Activated naive CD4-positive, alpha-beta T cell treated with anti-CD3 and anti-CD28 coated beads, Interleukin-2, amount 10 ng/mL, durations not matched to agents 7 days and 5 days (primary cell): ENCODE measurements at regions of chr16 and their contacts with region 1.

Region 1: DNA sequence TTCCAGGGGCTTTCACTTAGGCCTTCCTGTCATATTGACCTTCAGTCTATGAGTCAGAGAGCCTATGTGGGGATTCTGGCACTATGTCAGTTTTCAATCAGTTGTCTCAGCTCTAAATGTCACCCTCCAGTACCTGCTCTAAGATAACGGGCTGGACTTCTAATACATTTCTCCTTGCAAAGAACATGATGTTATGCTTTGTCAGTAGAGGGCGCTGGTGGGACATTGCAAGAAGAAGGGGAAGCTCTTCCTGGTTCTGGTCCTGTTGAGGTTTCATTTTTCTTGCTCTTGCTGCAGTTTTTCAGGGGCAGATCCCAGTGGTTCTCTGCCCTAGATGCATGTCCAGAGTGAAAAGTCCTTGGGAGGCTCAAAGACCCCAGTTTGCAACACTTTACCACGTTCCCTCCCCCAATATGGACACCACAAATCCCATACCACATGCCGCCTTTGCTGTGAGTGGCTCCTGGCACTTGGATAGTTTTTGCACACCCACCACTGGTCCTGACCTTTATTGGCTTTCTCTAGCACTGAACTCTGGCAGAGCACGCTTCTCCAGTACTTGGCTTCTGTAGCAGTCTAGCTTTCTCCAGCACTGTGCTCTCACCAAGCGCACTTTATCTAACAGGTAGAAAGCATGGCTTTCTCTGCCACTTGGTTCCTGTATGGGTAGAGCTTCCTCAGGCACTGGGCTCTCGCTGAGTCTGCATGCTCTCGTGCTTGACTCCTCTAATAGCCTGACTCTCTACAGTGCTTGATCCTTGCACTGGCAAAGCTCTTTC is 49.0 kb downstream of the BCL7C start:
- DNase-seq: peak; percentile 89
- H3K4me3 Mint-ChIP-seq: peak overlapping the region; percentile 4
- H3K27ac Mint-ChIP-seq: peak overlapping the region; percentile 20
- H3K4me1 Mint-ChIP-seq: peaks cover 12% of the 10 kb centered on the region
- H3K27me3 Mint-ChIP-seq: peaks cover 18% of the 10 kb centered on the region

Region 2: DNA sequence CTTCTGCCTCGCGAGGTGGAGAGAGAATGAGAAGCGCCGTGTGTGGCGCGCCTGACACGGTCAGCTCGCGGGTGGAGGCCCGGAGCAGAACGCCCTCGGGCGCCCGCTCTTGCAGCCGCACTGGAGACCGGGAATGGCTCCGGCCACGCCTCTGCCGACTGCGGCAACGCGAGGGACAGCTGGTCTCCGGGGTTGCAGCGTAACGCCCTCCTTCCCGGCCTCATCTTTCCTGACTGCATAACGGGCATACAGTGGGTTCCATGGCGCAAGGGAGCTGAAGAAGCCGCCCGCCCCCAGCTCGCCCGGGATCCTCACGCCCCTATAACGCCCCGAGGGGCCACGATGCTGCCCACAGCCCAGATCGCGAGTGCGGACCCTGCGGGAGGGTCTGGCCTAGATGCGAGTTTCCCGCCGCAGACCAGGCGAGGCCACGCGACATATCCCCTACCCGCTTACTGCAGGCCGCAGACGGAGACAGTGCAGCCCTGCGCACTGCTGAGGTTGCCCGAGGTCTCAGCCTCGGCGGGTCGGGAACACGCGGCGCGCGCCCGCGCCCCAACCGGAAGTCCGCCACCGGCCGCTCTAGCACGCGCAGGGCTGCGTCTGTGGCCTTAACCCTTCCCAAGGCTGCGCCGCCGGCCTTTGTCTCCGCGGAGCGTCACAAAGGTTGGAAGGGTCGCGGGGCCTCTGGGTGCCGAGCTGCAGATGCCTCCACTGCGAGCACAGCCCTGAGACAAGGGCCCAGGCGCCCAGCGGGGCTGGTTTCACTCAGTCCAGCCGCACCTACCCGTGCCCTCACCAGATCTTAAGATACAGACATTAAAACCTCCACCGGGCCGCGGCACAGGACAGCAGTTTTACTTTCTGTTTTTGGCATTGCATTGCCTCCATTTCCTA is 30.2 kb after region 1 on chr16:
- CTCF ChIA-PET with region 1: interaction called, 19 read pairs
- DNase-seq: peak; percentile 90
- H3K4me3 Mint-ChIP-seq: peak overlapping the region; percentile 89
- H3K27ac Mint-ChIP-seq: peak overlapping the region; percentile 90
- H3K4me1 Mint-ChIP-seq: peaks cover 33% of the 10 kb centered on the region
- H3K27me3 Mint-ChIP-seq: no peaks in the 10 kb centered on the region

Region 3: GRCh38 chr16:30902029-30902972 is 57.4 kb after region 1 on chr16:
- CTCF ChIA-PET with region 1: interaction called, 88 read pairs
- DNase-seq: peak; percentile 73
- H3K4me3 Mint-ChIP-seq: peak overlapping the region; percentile 94
- H3K27ac Mint-ChIP-seq: peak overlapping the region; percentile 95
- H3K4me1 Mint-ChIP-seq: peaks cover 60% of the 10 kb centered on the region
- H3K27me3 Mint-ChIP-seq: no peaks in the 10 kb centered on the region

Region 4: GRCh38 chr16:30934827-30935557 is 90.1 kb after region 1 on chr16:
- CTCF ChIA-PET with region 1: interaction called, 55 read pairs
- DNase-seq: peak; percentile 66
- H3K4me3 Mint-ChIP-seq: no peak overlapping the region
- H3K27ac Mint-ChIP-seq: no peak overlapping the region
- H3K4me1 Mint-ChIP-seq: peaks cover 25% of the 10 kb centered on the region
- H3K27me3 Mint-ChIP-seq: no peaks in the 10 kb centered on the region

Region 5: DNA sequence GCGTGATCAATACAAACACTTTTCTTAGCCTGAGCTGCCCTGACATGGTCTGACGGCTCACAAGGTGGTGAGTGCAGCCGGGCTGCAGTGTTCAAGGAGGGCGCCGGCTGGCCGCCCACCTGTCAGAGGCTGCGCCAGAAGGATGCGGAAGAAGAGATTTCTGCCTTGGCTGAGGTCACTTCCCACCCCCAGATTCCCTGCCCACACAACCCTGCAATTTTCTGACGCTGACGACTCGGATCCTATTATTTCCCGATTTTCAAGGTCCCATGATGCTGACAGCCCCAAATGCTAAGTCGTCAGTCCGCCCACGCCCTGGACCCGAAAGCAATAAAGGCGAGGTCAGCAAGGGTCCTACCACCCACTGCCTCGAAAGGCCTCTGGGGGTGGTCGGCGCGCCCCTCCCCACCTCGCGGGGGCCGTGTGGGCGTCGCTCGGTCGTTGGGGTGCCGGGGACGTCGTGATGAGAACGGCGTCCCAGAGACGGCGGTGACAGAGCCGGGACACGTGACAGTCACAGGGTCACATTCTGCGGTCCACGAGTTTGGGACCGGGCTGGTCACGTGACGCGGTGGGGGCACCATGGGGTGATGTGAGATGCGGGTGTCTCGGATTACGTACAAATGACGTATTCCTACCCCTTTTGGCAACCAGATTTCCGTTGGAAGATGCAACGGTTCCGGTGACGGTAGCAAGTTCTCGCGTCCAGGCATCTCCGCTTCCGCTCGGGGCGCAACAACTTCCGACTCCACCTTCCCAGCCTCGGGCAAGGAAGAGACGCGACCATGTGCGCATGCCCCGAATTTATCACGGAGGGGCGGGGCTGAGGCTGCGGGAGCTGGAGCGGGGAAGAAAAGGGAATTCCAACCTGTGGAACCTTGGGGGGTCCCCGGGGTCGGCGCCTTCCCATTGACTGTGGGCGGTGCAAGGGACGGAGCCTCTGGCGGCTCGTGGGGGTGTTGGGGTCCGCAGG is 188.2 kb after region 1 on chr16 and contains the start of gene STX4:
- CTCF ChIA-PET with region 1: no interaction called
- DNase-seq: peak; percentile 99
- H3K4me3 Mint-ChIP-seq: peak within 1 kb of the TSS; percentile 95
- H3K27ac Mint-ChIP-seq: peak within 1 kb of the TSS; percentile 96
- H3K4me1 Mint-ChIP-seq: peaks cover 23% of the 10 kb centered on the region
- H3K27me3 Mint-ChIP-seq: no peaks in the 10 kb centered on the region